Aorta (tissue), 5 donors: ENCODE measurements at regions of chr2 and their contacts with region 1.

Region 1: GRCh38 chr2:230758566-230759480 is 46.2 kb downstream of the CAB39 start:
- DNase-seq: no peak
- ATAC-seq: no peak
- H3K4me3 ChIP-seq: no peak overlapping the region
- H3K27ac ChIP-seq: peak overlapping the region in 1 of 2 donors; percentile 41
- H3K4me1 ChIP-seq: peaks cover 3 to 8% of the 10 kb centered on the region in 2 donors
- H3K27me3 ChIP-seq: no peaks in the 10 kb centered on the region

Region 2: GRCh38 chr2:230793572-230794359 is 34.9 kb after region 1 on chr2:
- intact Hi-C with region 1: loop called in 1 of 2 experiments (anchors 5 kb)
- DNase-seq: peak; percentile 86 to 88
- ATAC-seq: peak; percentile 90
- H3K4me3 ChIP-seq: no peak overlapping the region
- H3K27ac ChIP-seq: peak overlapping the region; percentile 91 to 98
- H3K4me1 ChIP-seq: peaks cover 0 to 10% of the 10 kb centered on the region in 2 donors
- H3K27me3 ChIP-seq: no peaks in the 10 kb centered on the region

Region 3: GRCh38 chr2:231152800-231153557 is 394.2 kb after region 1 on chr2:
- intact Hi-C with region 1: no loop called
- DNase-seq: no peak
- ATAC-seq: no peak
- H3K4me3 ChIP-seq: no peak overlapping the region
- H3K27ac ChIP-seq: no peak overlapping the region
- H3K4me1 ChIP-seq: no peaks in the 10 kb centered on the region
- H3K27me3 ChIP-seq: no peaks in the 10 kb centered on the region